Activated naive CD4-positive, alpha-beta T cell treated with anti-CD3 and anti-CD28 coated beads for 36 hours (primary cell): ENCODE measurements at regions of chr13 and their contacts with region 1.

Region 1: GRCh38 chr13:105139380-105140285 is 1395.8 kb downstream of the EFNB2 start:
- DNase-seq: peak; percentile 74
- H3K4me3 Mint-ChIP-seq: peak overlapping the region; percentile 89
- H3K27ac Mint-ChIP-seq: peak overlapping the region; percentile 99
- H3K4me1 Mint-ChIP-seq: peaks cover 17% of the 10 kb centered on the region
- H3K27me3 Mint-ChIP-seq: no peaks in the 10 kb centered on the region

Region 2: DNA sequence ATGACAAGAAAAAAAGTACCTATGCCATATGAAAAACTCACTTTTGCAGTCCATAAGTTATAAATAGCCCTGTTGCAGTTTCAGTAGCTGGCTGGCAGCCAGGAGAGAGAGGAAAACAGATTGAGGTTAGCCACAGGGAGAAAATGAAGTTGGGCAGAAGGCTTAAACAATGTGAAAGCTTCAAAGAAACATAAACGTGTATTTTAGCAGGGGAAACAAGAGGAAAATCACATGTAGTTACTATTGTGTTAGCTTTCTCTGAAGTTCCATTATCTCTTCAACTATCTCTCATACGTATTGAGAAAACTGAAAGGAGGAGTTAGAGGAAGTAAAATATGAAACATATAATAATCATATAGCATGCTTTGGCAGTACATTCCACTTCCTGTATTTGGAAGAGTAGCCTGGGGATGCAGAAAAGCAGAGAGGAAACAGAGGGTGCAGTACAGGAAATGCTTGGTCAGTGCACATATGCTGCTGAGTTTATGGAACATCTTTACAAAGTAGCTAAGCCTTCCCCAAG is 155.3 kb before region 1 on chr13:
- CTCF ChIA-PET with region 1: no interaction called
- intact Hi-C with region 1: loop called (anchors 1 kb)
- DNase-seq: peak; percentile 51
- H3K4me3 Mint-ChIP-seq: peak overlapping the region; percentile 16
- H3K27ac Mint-ChIP-seq: peak overlapping the region; percentile 3
- H3K4me1 Mint-ChIP-seq: peaks cover 19% of the 10 kb centered on the region
- H3K27me3 Mint-ChIP-seq: no peaks in the 10 kb centered on the region

Region 3: DNA sequence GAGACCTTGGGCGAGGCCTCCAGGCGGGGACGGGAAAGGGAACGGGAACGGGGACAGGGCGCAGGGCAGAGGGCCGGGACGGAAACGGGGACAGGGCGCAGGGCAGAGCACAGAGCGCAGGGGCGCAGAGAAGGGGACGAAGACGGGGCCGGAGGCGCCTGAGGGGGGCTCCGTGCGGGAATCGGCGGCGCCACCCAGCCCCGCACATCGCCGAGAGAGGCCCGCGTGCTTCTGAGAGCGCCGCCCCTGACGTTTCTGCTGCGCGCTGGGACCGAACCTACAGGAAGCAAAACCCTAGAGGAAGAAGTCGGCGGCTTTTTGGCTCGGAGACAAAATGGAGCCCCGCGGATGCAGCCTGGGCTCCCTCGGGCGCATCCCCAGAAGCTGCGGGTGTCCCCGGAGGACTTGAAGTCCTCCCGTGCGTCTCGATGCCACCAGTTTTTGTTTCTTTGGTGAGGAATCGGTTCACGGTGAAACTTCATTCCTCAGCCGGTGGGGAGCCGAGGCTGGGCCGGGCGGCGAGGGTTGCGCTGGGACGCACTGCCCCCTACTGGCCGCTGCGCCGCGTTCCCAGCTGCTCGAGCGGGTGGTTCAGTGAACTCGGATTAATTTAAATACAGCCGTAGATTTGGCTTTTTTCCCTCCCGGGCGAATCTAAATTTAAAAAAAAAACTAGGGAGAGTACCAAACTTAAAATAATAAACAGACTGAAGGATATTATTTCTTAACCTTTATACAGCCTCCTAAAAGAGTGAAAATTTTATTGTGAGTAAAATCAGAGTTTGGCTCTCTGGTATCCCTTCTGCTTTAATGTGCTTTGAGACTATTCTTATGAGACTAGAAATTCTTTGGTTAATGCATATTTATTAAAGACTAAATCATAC is 1778.3 kb after region 1 on chr13:
- CTCF ChIA-PET with region 1: no interaction called
- intact Hi-C with region 1: loop called (anchors 5 kb)
- DNase-seq: peak; percentile 73
- H3K4me3 Mint-ChIP-seq: peak overlapping the region; percentile 72
- H3K27ac Mint-ChIP-seq: no peak overlapping the region
- H3K4me1 Mint-ChIP-seq: peaks cover 7% of the 10 kb centered on the region
- H3K27me3 Mint-ChIP-seq: peaks cover 44% of the 10 kb centered on the region